Activated CD8-positive, alpha-beta memory T cell treated with anti-CD3 and anti-CD28 coated beads, Interleukin-2, amount 10 ng/mL, durations not matched to agents 7 days and 5 days (primary cell): ENCODE measurements at regions of chr22 and their contacts with region 1.

Region 1: DNA sequence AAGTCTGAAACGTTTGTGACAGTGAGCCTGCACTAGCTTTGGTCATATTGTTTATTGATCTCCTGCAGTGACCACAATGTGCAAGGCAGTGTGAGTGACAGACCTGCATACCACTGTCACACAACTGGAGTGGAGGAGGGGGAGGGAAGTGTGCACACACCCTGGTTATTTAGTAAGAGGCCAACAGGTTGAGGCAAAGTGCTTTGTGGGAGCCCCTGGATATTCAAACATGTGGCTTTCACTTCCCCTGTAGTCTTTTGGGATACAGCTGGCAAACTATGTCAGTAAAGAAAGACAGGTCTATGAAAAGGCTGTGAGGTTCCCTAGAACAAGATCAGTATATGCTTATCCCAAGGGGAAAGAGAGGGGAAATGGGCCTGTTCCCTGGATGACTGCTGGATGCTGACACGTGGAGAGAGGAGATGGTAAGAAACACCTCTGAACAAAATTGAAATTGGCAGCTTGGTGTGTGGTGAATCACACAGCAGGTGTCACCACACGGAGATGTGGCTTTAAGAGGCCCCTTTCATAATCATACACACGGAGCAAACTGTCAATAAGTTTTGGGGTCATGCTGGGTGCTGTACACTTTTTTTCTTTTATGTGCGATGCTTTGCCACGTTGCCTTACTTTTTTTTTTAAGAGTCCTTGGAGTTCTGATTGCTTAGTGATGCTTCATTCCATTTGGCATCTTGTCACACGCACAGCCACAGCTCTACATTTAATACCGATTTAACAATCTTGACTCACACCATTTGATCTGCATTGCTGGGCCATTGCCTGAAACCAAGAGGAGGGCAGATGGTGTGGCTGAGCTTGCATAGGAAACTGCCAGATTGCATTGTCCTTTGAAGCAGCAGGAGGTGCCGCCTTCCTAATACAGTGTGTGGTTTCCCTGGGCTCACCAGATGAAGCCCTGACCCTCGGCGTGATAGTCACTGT is 11.3 kb downstream of the OSBP2 start:
- DNase-seq: peak; percentile 77
- ATAC-seq: peak; percentile 79
- H3K4me3 Mint-ChIP-seq: peak overlapping the region; percentile 15
- H3K27ac Mint-ChIP-seq: peak overlapping the region; percentile 93
- H3K4me1 Mint-ChIP-seq: peaks cover 42% of the 10 kb centered on the region
- H3K27me3 Mint-ChIP-seq: no peaks in the 10 kb centered on the region

Region 2: GRCh38 chr22:30742291-30743256 is 36.6 kb after region 1 on chr22:
- CTCF ChIA-PET with region 1: interaction called, 11 read pairs
- DNase-seq: peak; percentile 73
- ATAC-seq: peak; percentile 50
- H3K4me3 Mint-ChIP-seq: peak overlapping the region; percentile 52
- H3K27ac Mint-ChIP-seq: peak overlapping the region; percentile 98
- H3K4me1 Mint-ChIP-seq: peaks cover 77% of the 10 kb centered on the region
- H3K27me3 Mint-ChIP-seq: no peaks in the 10 kb centered on the region